Thyroid gland (tissue), 4 donors: ENCODE measurements at regions of chr15 and their contacts with region 1.

Region 1: DNA sequence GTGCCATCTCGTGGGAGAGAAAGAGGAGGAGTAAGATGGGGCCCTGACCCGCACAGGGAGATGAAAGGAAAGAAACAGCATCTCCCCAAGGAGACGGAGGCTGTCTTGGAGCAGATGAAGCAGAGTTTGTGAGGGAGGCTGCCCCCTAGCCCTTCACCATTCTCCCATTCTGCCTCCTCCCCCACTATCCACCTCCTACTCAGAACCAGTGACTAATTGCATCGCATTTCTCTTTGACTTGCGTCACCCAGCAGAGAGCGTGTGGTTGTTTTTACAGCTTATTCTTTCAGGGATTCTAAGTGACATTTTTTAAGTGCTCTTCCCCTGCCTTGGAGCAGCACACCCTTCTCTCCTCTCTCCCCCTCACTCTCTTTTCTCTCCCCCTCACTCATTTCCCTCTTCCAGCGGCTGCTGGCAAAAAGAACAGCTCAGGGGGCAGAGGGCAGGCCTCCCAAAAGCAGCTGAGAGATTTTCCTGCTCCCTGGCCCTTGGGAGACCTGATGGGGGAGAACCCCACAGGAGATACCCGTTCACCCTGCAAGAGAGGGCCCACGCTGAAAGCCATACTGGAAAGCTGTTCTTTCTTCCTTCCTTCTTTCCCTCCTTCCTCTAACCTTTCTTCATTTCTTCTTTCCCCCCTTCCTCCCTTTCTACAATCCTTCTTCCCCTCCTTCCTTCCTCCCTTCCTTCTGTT is 91.8 kb downstream of the MRPL46 start:
- DNase-seq: no peak
- H3K4me3 ChIP-seq: no peak overlapping the region
- H3K27ac ChIP-seq: no peak overlapping the region
- H3K4me1 ChIP-seq: no peaks in the 10 kb centered on the region
- H3K27me3 ChIP-seq: no peaks in the 10 kb centered on the region
- CTCF ChIP-seq: no peak
- POLR2A ChIP-seq: no peak

Region 2: GRCh38 chr15:88288664-88289063 is 86.7 kb before region 1 on chr15:
- intact Hi-C with region 1: no loop called
- DNase-seq: no peak
- H3K4me3 ChIP-seq: no peak overlapping the region
- H3K27ac ChIP-seq: no peak overlapping the region
- H3K4me1 ChIP-seq: no peaks in the 10 kb centered on the region
- H3K27me3 ChIP-seq: no peaks in the 10 kb centered on the region
- CTCF ChIP-seq: no peak
- POLR2A ChIP-seq: no peak

Region 3: DNA sequence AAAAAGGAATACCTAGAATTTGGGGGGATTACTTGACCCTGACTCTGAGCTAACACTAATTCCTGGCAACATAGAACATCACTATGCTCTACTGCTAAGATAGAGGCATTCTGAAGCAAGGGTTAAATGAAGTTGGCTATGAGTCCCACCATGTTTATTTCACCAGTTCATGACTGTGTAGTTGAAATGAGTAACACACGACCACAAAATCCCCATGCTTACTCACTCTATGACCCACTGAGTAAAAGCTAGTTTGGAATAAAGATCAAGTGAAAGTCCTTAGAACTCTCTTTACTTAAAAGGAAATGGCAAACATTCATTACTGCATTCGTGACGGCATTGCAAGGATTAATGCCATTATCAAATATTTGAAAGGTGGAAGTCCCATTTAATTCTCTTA is 44.4 kb after region 1 on chr15:
- intact Hi-C with region 1: no loop called
- DNase-seq: no peak
- H3K4me3 ChIP-seq: no peak overlapping the region
- H3K27ac ChIP-seq: no peak overlapping the region
- H3K4me1 ChIP-seq: no peaks in the 10 kb centered on the region
- H3K27me3 ChIP-seq: no peaks in the 10 kb centered on the region
- CTCF ChIP-seq: no peak
- POLR2A ChIP-seq: no peak

Region 4: DNA sequence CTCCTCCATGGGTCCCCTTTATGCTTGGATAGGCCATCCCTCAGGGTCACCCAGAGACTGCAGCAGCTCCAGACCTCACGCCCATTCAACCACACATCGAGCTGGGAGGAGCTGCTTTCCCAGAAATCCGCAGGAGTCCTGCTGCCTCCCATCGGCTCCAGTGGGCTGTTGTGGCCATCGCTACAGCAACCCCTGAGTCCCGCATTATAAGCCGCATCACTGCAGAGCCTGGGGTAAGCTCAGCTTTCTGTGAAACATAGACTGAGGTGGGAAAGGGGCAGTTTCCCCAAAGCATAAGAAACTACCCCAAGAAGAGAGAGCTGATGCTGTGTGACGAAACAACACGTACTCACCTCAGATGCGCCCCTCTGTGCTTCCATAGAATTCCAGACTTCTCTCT is 56.1 kb after region 1 on chr15:
- intact Hi-C with region 1: loop called (anchors 10 kb)
- DNase-seq: no peak
- H3K4me3 ChIP-seq: no peak overlapping the region
- H3K27ac ChIP-seq: no peak overlapping the region
- H3K4me1 ChIP-seq: no peaks in the 10 kb centered on the region
- H3K27me3 ChIP-seq: no peaks in the 10 kb centered on the region
- CTCF ChIP-seq: no peak
- POLR2A ChIP-seq: no peak